CD4-positive, alpha-beta T cell (primary cell): ENCODE measurements at regions of chr6 and their contacts with region 1.

Region 1: DNA sequence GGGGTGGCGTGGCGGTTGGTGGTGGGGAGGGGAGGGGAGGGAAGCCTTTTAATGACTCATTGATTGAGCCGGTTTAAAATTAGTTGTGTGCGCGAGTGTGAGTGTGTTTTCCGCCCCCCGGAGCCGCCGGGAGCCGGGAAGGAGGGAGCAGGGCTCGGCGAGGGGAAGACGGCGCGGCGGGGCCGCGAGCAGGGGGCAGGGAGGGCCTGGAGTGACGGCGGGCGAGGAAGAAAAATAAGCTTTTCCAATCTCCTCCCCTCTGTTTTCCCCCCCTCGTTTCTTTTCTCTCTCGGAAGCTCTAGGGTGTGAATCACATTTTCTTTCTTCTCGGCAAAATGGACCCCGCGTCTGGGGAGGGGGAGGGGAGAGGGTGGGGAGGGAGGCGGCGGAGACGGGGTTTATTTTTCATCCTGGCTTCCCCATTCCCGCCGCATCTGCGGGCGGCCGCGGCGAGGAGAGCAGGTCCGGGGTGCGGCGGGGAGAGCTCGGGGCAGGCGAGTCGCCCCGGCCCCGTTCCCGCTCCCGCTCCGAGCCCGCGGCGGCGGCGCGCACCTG is 847 bp downstream of the BICRAL start:
- DNase-seq: peak; percentile 69 to 90 (median 77)
- ATAC-seq: peak; percentile 60
- H3K4me3 ChIP-seq: peak overlapping the region; percentile 81
- H3K4me3 Mint-ChIP-seq: peak overlapping the region; percentile 100
- H3K27ac ChIP-seq: peak overlapping the region; percentile 100
- H3K27ac Mint-ChIP-seq: no peak overlapping the region
- H3K4me1 ChIP-seq: peaks cover 51% of the 10 kb centered on the region
- H3K4me1 Mint-ChIP-seq: peaks cover 30% of the 10 kb centered on the region
- H3K27me3 ChIP-seq: no peaks in the 10 kb centered on the region
- H3K27me3 Mint-ChIP-seq: no peaks in the 10 kb centered on the region
- CTCF ChIP-seq: no peak

Region 2: GRCh38 chr6:42692137-42692911 is 90.4 kb before region 1 on chr6:
- CTCF ChIA-PET with region 1: no interaction called
- POLR2A ChIA-PET with region 1: interaction called, 13 read pairs
- intact Hi-C with region 1: no loop called
- DNase-seq: no peak
- ATAC-seq: no peak
- H3K4me3 ChIP-seq: no peak overlapping the region
- H3K4me3 Mint-ChIP-seq: no peak overlapping the region
- H3K27ac ChIP-seq: peak overlapping the region in 1 of 2 donors; percentile 5
- H3K27ac Mint-ChIP-seq: peak overlapping the region; percentile 84
- H3K4me1 ChIP-seq: peaks cover 11% of the 10 kb centered on the region
- H3K4me1 Mint-ChIP-seq: peaks cover 39% of the 10 kb centered on the region
- H3K27me3 ChIP-seq: no peaks in the 10 kb centered on the region
- H3K27me3 Mint-ChIP-seq: no peaks in the 10 kb centered on the region
- CTCF ChIP-seq: no peak

Region 3: GRCh38 chr6:42756722-42757121 is 26.0 kb before region 1 on chr6:
- CTCF ChIA-PET with region 1: no interaction called
- POLR2A ChIA-PET with region 1: interaction called, 1,427 read pairs
- intact Hi-C with region 1: no loop called
- DNase-seq: no peak
- ATAC-seq: no peak
- H3K4me3 ChIP-seq: no peak overlapping the region
- H3K4me3 Mint-ChIP-seq: no peak overlapping the region
- H3K27ac ChIP-seq: no peak overlapping the region
- H3K27ac Mint-ChIP-seq: no peak overlapping the region
- H3K4me1 ChIP-seq: peaks cover 7% of the 10 kb centered on the region
- H3K4me1 Mint-ChIP-seq: peaks cover 57% of the 10 kb centered on the region
- H3K27me3 ChIP-seq: no peaks in the 10 kb centered on the region
- H3K27me3 Mint-ChIP-seq: no peaks in the 10 kb centered on the region
- CTCF ChIP-seq: no peak

Region 4: DNA sequence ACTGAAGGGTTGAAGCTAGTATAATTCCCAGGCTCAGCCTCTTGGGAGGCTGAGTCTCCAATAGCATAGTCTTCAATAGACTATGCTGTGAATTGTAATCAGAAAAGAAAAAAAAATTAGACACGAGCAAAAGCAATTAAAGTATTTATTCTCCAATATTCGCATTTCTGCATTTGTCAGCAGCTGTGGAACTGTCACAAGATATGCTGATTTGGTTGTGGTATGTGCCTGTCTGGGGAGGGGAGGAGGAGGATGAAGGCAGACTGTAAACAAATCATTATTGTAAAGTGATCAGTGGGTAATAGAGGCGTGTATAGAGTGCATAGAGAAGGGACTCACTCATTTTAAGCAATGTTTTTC is 11.0 kb before region 1 on chr6:
- CTCF ChIA-PET with region 1: interaction called, 11 read pairs
- POLR2A ChIA-PET with region 1: interaction called, 724 read pairs
- intact Hi-C with region 1: loop called (anchors 1 kb)
- DNase-seq: peak in 8 of 14 experiments; percentile 20 to 84 (median 41)
- ATAC-seq: peak; percentile 27
- H3K4me3 ChIP-seq: peak overlapping the region; percentile 19
- H3K4me3 Mint-ChIP-seq: peak overlapping the region; percentile 76
- H3K27ac ChIP-seq: peak overlapping the region; percentile 92 to 94
- H3K27ac Mint-ChIP-seq: peak overlapping the region; percentile 99
- H3K4me1 ChIP-seq: peaks cover 75% of the 10 kb centered on the region
- H3K4me1 Mint-ChIP-seq: peaks cover 75% of the 10 kb centered on the region
- H3K27me3 ChIP-seq: no peaks in the 10 kb centered on the region
- H3K27me3 Mint-ChIP-seq: no peaks in the 10 kb centered on the region
- CTCF ChIP-seq: no peak

Region 5: DNA sequence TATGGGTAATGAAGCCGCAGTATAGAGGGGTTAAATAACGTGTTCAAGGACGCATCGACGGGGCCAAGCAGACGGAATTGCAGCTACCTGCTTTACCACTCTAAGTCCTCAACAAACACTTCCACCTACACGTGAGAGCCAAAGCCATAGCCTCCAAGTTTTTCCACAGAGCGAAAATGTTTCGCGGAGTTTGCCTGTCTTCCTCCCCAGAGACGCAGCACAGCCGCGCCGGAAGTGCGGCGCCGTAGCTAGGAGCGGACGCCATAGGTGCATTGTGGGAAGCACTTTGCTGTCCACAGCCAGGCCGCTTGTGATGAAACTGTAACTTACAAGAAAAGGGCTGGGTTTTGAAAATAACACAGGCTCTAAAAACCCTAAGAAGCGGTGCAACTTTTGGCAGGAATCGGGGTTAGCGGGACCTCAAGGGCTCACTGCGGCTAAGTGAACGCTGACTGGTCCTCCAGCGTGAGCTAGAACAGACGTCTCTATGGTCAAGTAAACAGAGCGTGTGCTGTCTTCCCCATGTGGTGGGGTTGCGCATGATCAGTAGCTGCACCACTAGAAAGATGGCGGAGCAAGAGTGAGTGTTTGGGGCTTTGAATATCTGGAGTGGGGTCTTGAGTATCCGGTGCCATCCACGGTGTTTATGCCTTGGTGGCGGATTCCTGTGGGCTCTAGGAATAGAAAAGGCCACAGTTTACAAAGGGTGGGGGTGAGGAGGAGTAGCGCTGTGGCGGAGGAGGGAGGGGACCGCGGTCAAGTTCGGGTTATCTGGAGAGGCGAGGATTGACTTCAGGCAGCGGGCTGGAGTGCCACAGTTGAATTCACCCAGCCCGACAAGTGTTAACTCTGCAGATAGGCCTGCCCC is 96.9 kb after region 1 on chr6 and contains the start of gene RPL7L1:
- CTCF ChIA-PET with region 1: no interaction called
- POLR2A ChIA-PET with region 1: interaction called, 66 read pairs
- intact Hi-C with region 1: loop called in 1 of 2 experiments (anchors 5 kb)
- DNase-seq: peak; percentile 68 to 93 (median 79)
- ATAC-seq: peak; percentile 92
- H3K4me3 ChIP-seq: peak within 1 kb of the TSS; percentile 69
- H3K4me3 Mint-ChIP-seq: peak within 1 kb of the TSS; percentile 93
- H3K27ac ChIP-seq: peak within 1 kb of the TSS; percentile 94 to 95
- H3K27ac Mint-ChIP-seq: peak within 1 kb of the TSS; percentile 97
- H3K4me1 ChIP-seq: peaks cover 41% of the 10 kb centered on the region
- H3K4me1 Mint-ChIP-seq: peaks cover 23% of the 10 kb centered on the region
- H3K27me3 ChIP-seq: no peaks in the 10 kb centered on the region
- H3K27me3 Mint-ChIP-seq: no peaks in the 10 kb centered on the region
- CTCF ChIP-seq: no peak
- total RNA-seq, gene RPL7L1: 76.1 TPM

Region 6: DNA sequence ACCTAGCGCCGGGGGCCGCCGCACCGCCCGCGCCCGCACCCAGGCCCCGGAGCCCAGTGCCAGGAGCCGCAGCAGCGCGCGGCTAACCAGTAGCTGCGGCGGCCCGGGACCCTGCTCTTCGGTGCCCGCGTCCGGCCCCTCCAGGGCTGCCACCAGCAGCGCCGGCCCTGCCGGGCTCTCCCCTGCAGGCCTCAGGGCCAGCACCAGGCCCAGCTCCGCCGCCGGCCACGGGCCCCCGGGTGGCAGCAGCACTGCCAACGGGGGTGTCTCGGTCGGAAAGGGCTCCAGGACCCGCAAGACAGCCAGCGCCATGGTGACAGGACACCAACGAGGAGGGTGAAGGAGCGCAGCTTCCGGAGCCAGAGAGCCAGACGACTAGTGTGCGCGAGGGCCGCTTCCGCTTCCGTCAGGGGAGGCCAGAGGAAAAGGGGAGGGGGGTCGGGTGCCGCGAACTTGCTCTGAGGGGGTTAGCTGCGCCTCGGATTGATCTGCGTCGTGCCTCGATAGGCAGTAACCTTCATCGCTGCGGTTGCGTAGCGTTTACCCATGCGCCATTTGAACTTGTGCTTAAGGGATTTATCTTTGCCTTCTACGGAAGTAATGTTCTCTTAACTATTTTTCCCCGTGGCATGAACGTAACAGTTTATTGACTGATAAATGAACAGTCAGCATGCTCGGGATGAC is 196.3 kb after region 1 on chr6 and contains the start of gene PEX6:
- CTCF ChIA-PET with region 1: no interaction called
- POLR2A ChIA-PET with region 1: interaction called, 13 read pairs
- intact Hi-C with region 1: no loop called
- DNase-seq: peak; percentile 81 to 98 (median 93)
- ATAC-seq: peak; percentile 94
- H3K4me3 ChIP-seq: peak within 1 kb of the TSS; percentile 85
- H3K4me3 Mint-ChIP-seq: peak within 1 kb of the TSS; percentile 95
- H3K27ac ChIP-seq: peak within 1 kb of the TSS; percentile 83 to 85
- H3K27ac Mint-ChIP-seq: peak within 1 kb of the TSS; percentile 97
- H3K4me1 ChIP-seq: peaks cover 50% of the 10 kb centered on the region
- H3K4me1 Mint-ChIP-seq: peaks cover 47% of the 10 kb centered on the region
- H3K27me3 ChIP-seq: no peaks in the 10 kb centered on the region
- H3K27me3 Mint-ChIP-seq: no peaks in the 10 kb centered on the region
- CTCF ChIP-seq: no peak
- total RNA-seq, gene PEX6: 12.8 to 13.6 TPM

Region 7: GRCh38 chr6:43059168-43060033 is 276.7 kb after region 1 on chr6 and contains the starts of genes KLC4 and MRPL2:
- CTCF ChIA-PET with region 1: no interaction called
- POLR2A ChIA-PET with region 1: no interaction called
- intact Hi-C with region 1: no loop called
- DNase-seq: peak; percentile 94 to 99 (median 97)
- ATAC-seq: peak; percentile 97
- H3K4me3 ChIP-seq: peak within 1 kb of the TSS; percentile 89
- H3K4me3 Mint-ChIP-seq: peak within 1 kb of the TSS; percentile 91
- H3K27ac ChIP-seq: peak within 1 kb of the TSS; percentile 85 to 95
- H3K27ac Mint-ChIP-seq: peak within 1 kb of the TSS; percentile 96
- H3K4me1 ChIP-seq: peaks cover 29% of the 10 kb centered on the region
- H3K4me1 Mint-ChIP-seq: peaks cover 50% of the 10 kb centered on the region
- H3K27me3 ChIP-seq: no peaks in the 10 kb centered on the region
- H3K27me3 Mint-ChIP-seq: no peaks in the 10 kb centered on the region
- CTCF ChIP-seq: no peak
- total RNA-seq, gene KLC4: 39.6 to 40.8 TPM
- total RNA-seq, gene MRPL2: 42.8 to 48.0 TPM